Breast epithelium (tissue), 4 donors: ENCODE measurements at regions of chr17 and their contacts with region 1.

Region 1: DNA sequence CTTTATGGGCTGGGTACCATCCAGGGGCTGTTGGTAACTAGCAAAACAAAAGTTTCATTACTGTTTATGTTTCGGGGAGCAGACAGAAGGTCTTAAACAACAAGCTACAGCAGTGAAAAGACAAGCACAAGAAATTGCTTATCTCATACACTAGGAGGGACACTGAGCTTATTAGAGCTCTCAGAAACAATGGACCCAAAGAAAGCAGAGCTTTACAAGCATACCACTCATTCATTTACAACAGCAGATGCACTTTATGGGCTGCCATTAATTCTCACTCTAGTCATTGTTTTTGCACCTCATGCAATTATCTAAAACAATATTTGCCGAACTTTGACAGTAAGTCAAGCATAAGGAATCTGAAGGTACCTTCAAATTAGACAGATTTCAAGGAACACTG is 10.0 kb downstream of the KRT16 start:
- DNase-seq: no peak
- H3K4me3 ChIP-seq: no peak overlapping the region
- H3K27ac ChIP-seq: no peak overlapping the region
- H3K4me1 ChIP-seq: no peaks in the 10 kb centered on the region
- H3K27me3 ChIP-seq: no peaks in the 10 kb centered on the region
- CTCF ChIP-seq: no peak
- POLR2A ChIP-seq: no peak

Region 2: DNA sequence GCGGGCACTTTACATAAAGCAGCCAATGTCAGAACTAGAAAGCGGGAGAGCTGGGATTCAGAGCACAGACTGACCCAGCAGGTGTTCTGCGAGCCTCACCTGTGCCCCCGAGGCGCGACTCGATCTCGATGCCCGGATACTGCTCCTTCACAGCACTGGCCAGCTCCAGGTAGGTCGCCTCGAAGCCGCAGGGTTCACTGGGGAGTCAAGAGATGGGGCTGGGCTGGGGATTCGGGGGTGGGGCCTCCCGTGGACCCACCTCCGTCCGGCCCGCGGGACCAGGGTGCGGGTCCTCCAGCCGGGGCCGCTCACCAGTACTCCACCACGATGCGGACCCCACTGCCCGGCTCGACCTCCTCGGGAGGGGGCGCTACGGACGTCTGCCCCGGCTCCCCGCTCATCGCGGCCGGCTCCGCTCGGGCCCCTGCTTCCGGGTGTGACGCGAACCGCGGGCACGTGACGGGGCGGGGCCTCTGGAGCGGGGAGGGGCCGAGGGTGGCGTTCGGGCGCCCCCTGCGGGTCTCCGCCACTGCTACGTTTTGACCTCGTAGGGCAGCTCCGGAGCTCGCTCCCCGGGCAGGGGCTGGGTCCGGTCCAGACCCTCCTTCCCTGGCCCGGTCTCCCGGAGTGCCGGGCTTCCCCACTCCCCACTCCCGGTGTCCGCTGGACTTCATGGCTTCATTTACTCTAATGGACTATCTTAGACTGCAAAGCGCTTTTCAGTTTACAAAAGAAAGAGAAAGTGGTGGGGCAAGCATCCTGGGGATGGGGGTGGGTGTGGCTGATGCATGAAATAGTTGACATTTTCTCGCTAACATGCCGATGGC is 1872.2 kb before region 1 on chr17 and contains the start of gene MIEN1:
- intact Hi-C with region 1: loop called (anchors 5 kb)
- DNase-seq: peak; percentile 85 to 96
- H3K4me3 ChIP-seq: peak within 1 kb of the TSS; percentile 75 to 99 (median 77)
- H3K27ac ChIP-seq: peak within 1 kb of the TSS; percentile 97 to 99
- H3K4me1 ChIP-seq: peaks cover 4 to 10% of the 10 kb centered on the region in 2 donors
- H3K27me3 ChIP-seq: no peaks in the 10 kb centered on the region
- CTCF ChIP-seq: peak; percentile 82 to 91 (median 89)
- POLR2A ChIP-seq: peak; percentile 87
- total RNA-seq, gene MIEN1: 50.7 to 68.2 (median 61.6) TPM

Region 3: GRCh38 chr17:41579484-41580243 is 22.9 kb before region 1 on chr17:
- intact Hi-C with region 1: no loop called
- DNase-seq: peak; percentile 91 to 95
- H3K4me3 ChIP-seq: peak overlapping the region in 1 of 3 donors; percentile 43
- H3K27ac ChIP-seq: peak overlapping the region; percentile 86 to 90
- H3K4me1 ChIP-seq: no peaks in the 10 kb centered on the region
- H3K27me3 ChIP-seq: no peaks in the 10 kb centered on the region
- CTCF ChIP-seq: peak; percentile 82 to 98 (median 86)
- POLR2A ChIP-seq: peak; percentile 32

Region 4: DNA sequence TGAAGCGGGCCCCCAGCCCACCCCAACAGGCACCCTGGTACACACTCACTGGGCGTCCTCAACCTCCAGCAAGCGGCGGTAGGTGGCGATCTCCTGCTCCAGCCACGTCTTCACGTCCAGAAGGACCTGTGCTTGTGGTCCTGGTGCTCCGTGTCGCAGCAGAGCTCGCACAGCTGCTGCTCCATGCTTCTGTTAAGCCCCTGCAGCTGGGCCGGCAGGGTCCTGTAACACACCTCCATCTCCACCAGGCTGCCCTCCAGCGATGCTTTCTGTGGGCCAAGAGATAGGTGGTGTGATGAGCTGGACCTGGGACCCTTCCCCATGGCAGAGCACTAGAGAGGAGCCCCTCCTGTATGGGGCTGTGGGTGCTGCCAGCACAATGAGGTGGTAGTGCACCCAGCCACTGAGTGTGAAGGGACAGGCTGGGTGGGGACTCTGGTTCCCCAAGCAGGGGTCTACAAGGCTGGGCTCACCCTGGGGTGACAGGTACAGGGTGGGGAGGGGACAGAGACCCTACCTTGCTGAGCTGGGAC is 25.4 kb after region 1 on chr17:
- intact Hi-C with region 1: loop called (anchors 1 kb)
- DNase-seq: peak in 1 of 2 donors; percentile 35
- H3K4me3 ChIP-seq: no peak overlapping the region
- H3K27ac ChIP-seq: no peak overlapping the region
- H3K4me1 ChIP-seq: no peaks in the 10 kb centered on the region
- H3K27me3 ChIP-seq: no peaks in the 10 kb centered on the region
- CTCF ChIP-seq: no peak
- POLR2A ChIP-seq: no peak

Region 5: DNA sequence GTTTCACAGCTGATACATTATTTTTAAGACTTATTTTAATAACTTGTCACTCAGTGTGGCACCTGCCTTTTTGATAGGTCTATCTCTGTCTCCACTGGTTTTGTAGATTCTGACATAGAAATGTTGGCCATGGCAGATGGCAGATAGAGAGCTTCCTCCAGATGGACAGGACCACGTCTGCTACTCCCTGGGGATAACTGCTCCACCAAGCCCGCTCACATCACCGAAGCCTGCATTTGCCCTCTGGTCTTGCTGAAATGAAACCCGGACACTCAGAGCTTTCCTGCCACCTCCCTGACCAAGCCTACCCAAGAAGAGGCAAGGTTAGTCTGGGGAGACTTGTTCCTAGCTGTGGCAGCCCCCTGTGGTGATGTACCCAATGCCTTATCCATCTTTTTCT is 148.3 kb after region 1 on chr17:
- intact Hi-C with region 1: no loop called
- DNase-seq: no peak
- H3K4me3 ChIP-seq: no peak overlapping the region
- H3K27ac ChIP-seq: no peak overlapping the region
- H3K4me1 ChIP-seq: no peaks in the 10 kb centered on the region
- H3K27me3 ChIP-seq: no peaks in the 10 kb centered on the region
- CTCF ChIP-seq: no peak
- POLR2A ChIP-seq: no peak